A673 (cell line): ENCODE measurements at regions of chr14 and their contacts with region 1.

Region 1: DNA sequence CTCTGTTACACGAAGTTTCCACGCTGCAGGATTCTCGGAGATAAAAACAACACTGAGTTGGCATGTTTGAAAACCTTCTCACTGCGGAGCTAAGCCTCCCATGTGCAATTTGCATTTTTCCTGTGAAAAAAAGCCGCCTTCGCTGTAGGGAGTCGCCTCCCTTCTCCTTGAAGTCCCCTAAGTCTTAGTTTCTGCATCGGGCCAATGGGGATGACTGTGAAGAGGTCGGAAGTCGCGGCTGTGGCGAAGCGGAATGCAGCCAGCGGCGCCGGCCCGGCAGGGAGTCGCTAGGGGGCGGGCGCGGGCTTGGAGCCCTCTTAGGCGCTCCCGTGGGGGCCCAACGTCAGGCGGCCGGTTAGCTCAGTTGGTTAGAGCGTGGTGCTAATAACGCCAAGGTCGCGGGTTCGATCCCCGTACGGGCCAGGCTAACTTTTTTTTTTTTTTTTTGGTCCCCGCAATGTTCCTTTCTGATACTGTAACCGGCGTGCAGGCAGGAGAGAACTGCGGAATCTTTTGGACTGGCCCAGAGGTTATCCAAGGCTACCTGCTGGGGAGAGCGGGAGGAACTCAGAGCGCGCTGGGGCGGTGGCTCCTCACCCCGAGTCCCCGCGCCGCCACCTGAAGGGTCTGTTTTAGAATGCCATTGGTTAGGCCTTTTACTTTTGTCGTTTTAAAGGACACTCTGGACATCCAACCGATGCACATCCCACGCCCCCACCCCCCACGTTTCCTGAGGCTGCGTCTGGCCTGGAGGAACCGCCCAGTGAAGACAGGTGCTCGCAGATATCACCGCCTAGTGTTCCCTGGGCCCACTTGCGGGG is 2.6 kb upstream of the ZNF839 start:
- DNase-seq: peak; percentile 93
- H3K4me3 ChIP-seq: peak overlapping the region; percentile 63
- H3K27ac ChIP-seq: peak overlapping the region; percentile 74
- H3K4me1 ChIP-seq: peaks cover 19% of the 10 kb centered on the region
- H3K27me3 ChIP-seq: no peaks in the 10 kb centered on the region
- CTCF ChIP-seq: peak; percentile 69

Region 2: GRCh38 chr14:101707068-101707842 is 609.7 kb before region 1 on chr14:
- CTCF ChIA-PET with region 1: interaction called, 5 read pairs
- POLR2A ChIA-PET with region 1: no interaction called
- intact Hi-C with region 1: loop called (anchors 10 kb)
- DNase-seq: peak; percentile 91
- H3K4me3 ChIP-seq: no peak overlapping the region
- H3K27ac ChIP-seq: no peak overlapping the region
- H3K4me1 ChIP-seq: peaks cover 6% of the 10 kb centered on the region
- H3K27me3 ChIP-seq: no peaks in the 10 kb centered on the region
- CTCF ChIP-seq: peak; percentile 81

Region 3: GRCh38 chr14:101774006-101774795 is 542.8 kb before region 1 on chr14:
- CTCF ChIA-PET with region 1: interaction called, 5 read pairs
- POLR2A ChIA-PET with region 1: no interaction called
- intact Hi-C with region 1: loop called (anchors 5 kb)
- DNase-seq: no peak
- H3K4me3 ChIP-seq: no peak overlapping the region
- H3K27ac ChIP-seq: no peak overlapping the region
- H3K4me1 ChIP-seq: peaks cover 3% of the 10 kb centered on the region
- H3K27me3 ChIP-seq: no peaks in the 10 kb centered on the region
- CTCF ChIP-seq: no peak

Region 4: DNA sequence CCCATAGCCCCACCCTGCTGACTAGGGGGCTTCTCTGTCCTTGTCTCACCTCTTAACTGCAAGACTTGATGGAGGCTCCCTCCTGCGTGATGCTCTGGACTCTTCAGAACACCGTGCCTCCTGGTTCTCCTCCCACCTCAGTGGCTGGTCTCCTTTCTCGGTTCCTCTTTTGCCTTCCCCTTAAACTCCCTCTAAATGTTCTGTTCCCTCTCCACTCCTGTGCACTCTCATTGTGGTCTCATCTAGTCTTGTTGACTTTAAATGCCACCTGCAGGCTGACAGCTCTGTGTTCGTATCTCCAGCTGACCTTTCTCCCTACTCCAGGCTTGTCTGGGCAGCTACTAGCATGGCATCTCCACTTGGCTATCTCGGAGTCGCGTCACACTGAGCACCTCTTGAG is 324.2 kb before region 1 on chr14:
- CTCF ChIA-PET with region 1: no interaction called
- POLR2A ChIA-PET with region 1: interaction called, 11 read pairs
- intact Hi-C with region 1: no loop called
- DNase-seq: no peak
- H3K4me3 ChIP-seq: no peak overlapping the region
- H3K27ac ChIP-seq: no peak overlapping the region
- H3K4me1 ChIP-seq: no peaks in the 10 kb centered on the region
- H3K27me3 ChIP-seq: no peaks in the 10 kb centered on the region
- CTCF ChIP-seq: no peak

Region 5: DNA sequence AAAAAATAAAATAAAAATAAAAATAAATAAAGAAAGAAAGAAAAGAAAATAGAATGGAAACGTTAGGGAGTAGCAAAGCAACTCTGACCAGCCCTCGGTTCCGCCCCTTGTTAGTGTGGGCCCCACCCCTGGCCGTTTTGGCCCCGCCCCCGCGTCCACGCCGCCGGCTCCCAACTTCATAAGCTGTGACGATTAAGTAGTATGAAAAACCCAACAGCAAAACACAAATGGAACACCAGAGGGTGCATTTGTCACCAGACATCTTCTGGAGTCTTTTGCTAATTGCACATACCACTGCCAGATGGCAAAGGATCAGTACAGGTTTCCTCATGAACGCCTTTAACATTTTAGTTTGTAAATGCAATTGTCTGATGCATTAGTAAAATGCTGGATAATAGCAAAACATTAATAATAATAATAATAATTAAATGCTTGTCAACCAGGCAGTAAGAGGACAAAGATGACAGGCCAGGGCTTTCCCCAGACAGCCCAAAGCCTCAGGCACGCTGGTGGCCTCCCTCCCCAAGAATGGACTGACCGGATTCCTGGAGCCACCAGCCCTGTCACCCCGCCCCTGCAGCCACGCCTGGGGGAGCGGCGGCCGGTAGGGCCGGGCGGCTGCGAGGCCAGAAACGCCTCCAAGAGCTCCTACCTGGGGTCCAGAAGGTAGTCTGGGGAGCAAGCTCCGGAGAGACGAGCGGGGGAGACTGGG is 253.7 kb before region 1 on chr14:
- CTCF ChIA-PET with region 1: interaction called, 11 read pairs
- POLR2A ChIA-PET with region 1: interaction called, 8 read pairs
- intact Hi-C with region 1: loop called (anchors 2 kb)
- DNase-seq: peak; percentile 95
- H3K4me3 ChIP-seq: no peak overlapping the region
- H3K27ac ChIP-seq: no peak overlapping the region
- H3K4me1 ChIP-seq: peaks cover 4% of the 10 kb centered on the region
- H3K27me3 ChIP-seq: no peaks in the 10 kb centered on the region
- CTCF ChIP-seq: peak; percentile 72

Region 6: DNA sequence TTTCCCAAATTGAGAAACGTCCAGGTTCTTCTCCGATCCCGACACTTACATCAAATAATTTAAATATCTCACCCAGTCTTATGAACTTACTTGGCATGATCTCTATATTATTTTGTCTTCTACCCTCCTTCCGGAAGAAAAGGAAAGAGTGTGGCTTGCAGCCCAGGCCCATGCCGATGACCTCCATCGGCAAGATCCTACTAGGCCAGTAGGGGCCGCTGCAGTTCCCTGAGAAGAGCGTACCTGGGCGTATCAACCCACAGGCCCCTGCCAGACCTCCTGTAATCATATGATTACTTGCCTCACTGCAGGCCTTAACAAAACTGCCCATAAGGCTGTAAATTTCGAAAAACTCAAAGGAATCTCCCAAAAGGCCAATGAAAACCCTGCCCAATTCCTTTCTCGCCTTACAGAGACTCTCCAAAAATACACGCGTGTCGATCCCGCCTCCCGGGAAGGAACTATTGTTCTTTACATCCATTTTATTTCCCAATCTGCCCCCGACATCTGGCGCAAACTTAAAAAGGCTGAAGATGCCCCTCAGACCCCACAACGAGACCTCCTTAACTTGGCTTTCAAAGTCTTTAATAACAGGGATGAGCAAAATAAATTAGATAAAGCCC is 81.6 kb before region 1 on chr14:
- CTCF ChIA-PET with region 1: interaction called, 4 read pairs
- POLR2A ChIA-PET with region 1: no interaction called
- intact Hi-C with region 1: loop called (anchors 2 kb)
- DNase-seq: peak; percentile 79
- H3K4me3 ChIP-seq: peak overlapping the region; percentile 51
- H3K27ac ChIP-seq: peak overlapping the region; percentile 56
- H3K4me1 ChIP-seq: peaks cover 6% of the 10 kb centered on the region
- H3K27me3 ChIP-seq: no peaks in the 10 kb centered on the region
- CTCF ChIP-seq: peak; percentile 82

Region 7: DNA sequence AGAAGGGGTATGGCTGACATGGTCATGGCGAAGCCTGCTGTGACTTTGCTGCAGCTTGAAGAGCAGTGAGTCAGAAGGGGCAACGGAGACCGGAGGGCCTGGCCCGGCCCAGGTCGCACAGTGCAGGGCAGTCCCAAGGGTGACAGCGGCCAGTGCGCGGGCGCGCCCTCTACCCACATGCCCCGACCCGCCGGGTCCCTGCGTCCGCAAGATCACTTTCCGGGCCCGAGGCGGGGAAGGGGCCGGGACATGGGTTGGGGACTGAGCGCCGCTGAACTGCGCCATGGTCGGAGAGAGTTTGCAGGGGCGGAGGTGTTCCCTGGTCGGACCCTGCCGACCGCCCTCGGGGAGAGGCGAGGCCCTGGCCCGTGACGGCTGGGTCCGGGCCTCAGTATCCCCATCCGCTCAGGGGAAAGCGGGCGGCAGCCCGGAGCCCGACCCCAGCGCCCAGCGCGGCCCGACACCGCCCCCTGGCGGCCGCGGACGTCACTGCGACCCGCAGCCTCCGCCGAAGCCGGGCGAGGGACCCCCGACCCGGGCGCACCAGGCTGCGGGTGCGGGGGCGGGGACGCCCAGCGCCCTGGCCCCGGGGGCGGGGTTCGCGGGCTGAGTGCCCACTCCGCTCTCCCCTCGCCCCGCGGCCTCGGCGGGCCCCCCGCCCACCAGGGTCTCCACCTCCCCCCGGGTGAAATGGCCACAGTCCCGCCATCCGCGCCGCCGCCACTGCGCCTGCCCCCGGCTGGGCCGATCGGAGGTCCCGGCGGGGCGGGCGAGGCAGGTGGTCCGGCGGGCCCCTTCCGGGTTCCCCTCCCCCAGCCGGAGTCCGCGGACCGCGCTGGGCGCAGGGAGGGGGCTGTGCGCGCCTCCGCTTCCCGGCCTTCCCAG is 199.8 kb after region 1 on chr14:
- CTCF ChIA-PET with region 1: no interaction called
- POLR2A ChIA-PET with region 1: no interaction called
- intact Hi-C with region 1: loop called (anchors 5 kb)
- DNase-seq: peak; percentile 47
- H3K4me3 ChIP-seq: peak overlapping the region; percentile 67
- H3K27ac ChIP-seq: peak overlapping the region; percentile 80
- H3K4me1 ChIP-seq: peaks cover 5% of the 10 kb centered on the region
- H3K27me3 ChIP-seq: no peaks in the 10 kb centered on the region
- CTCF ChIP-seq: peak; percentile 56

Region 8: DNA sequence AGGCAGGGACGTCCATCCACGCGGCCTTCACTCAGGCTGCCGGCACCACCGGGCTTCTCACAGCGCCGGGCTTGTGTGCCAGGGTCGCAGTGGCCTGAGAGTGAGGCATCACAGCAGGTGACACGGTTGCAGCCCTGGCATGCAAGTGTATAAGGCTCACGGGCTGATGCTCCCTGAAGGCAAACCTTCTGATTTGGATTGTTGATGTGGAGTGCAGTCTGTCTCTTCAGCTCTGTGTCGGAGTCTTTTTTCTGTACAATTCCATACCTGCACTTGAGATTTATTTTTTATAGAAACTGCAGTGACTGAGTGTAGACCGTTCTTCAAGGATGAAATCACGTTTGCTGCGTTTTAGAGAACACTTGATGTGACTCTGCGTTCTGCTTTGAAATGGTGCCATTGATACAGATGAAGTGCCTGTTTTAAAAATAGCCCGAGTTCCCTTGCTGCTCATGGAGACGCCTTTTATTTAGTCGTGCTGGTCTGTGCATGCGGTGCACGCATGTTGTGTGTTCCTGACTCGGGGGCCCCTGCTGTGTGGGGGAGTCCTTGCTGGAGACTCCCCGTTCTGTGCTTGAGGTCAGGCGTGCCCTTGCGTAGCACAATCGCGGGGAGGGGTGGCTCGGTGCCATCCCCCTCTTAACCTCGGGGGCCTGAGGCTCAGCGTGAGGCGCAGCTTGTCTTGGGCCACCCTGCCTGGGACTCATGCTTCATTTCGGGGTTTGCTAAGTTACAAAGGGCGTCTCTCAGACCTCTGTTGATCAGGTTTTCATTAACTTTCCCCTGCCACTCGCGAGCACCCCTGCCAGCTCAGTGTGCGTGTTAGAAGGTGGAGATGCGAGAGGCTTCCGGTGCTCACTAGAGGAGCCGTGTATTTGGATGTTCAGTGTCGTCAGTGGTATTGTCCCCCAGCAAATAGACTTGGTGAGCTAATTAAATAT is 583.9 kb after region 1 on chr14:
- CTCF ChIA-PET with region 1: no interaction called
- POLR2A ChIA-PET with region 1: no interaction called
- intact Hi-C with region 1: no loop called
- DNase-seq: no peak
- H3K4me3 ChIP-seq: no peak overlapping the region
- H3K27ac ChIP-seq: no peak overlapping the region
- H3K4me1 ChIP-seq: no peaks in the 10 kb centered on the region
- H3K27me3 ChIP-seq: no peaks in the 10 kb centered on the region
- CTCF ChIP-seq: no peak